Activated CD8-positive, alpha-beta memory T cell treated with anti-CD3 and anti-CD28 coated beads, Interleukin-2, amount 10 ng/mL, durations not matched to agents 7 days and 5 days (primary cell): ENCODE measurements at regions of chr2 and their contacts with region 1.

Region 1: DNA sequence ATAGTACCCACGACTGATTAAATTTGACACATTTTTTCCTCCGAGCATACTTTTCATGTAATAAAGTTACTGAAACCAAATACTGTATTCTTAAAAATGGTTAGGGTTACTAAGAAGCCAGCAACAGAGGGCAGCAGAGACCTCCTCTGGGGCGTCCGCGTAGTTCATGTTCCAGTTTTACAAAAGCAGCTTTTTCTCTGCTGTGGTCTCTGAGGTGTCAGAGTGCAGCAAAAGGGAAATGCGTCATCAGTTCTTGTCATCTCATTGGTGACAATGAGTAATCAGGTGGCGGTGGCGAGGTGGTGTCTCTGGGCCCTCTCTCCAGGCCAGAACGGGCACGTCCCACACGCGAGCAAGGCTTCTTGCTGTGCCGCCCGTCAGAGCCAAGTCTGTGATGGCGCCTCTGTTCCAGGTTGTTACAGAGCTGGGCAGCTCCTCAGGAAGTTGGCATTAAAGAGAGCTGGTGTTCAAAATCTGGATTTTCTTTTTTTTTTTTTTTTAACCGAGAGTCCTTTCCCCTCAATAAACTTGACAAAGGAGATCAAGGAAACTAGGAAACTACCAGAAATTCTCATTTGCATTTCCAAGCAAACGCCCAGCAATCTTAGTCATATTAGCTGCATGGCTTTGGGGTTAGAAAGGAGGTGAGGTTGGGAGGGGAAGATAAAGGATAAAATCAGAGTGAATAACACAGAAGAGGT is 98.6 kb upstream of the BZW1 start:
- DNase-seq: peak; percentile 98
- ATAC-seq: peak; percentile 99
- H3K4me3 Mint-ChIP-seq: peak overlapping the region; percentile 61
- H3K27ac Mint-ChIP-seq: peak overlapping the region; percentile 96
- H3K4me1 Mint-ChIP-seq: peaks cover 23% of the 10 kb centered on the region
- H3K27me3 Mint-ChIP-seq: no peaks in the 10 kb centered on the region

Region 2: GRCh38 chr2:200658278-200658864 is 54.8 kb before region 1 on chr2:
- CTCF ChIA-PET with region 1: no interaction called
- DNase-seq: no peak
- ATAC-seq: no peak
- H3K4me3 Mint-ChIP-seq: no peak overlapping the region
- H3K27ac Mint-ChIP-seq: no peak overlapping the region
- H3K4me1 Mint-ChIP-seq: no peaks in the 10 kb centered on the region
- H3K27me3 Mint-ChIP-seq: peaks cover 44% of the 10 kb centered on the region

Region 3: GRCh38 chr2:200735061-200735460 is 21.9 kb after region 1 on chr2:
- CTCF ChIA-PET with region 1: interaction called, 28 read pairs
- DNase-seq: no peak
- ATAC-seq: no peak
- H3K4me3 Mint-ChIP-seq: no peak overlapping the region
- H3K27ac Mint-ChIP-seq: no peak overlapping the region
- H3K4me1 Mint-ChIP-seq: peaks cover 10% of the 10 kb centered on the region
- H3K27me3 Mint-ChIP-seq: peaks cover 26% of the 10 kb centered on the region